ENCODE measurements at regions of chr17 and their contacts with region 1.

Region 1: GRCh38 chr17:38853292-38854219 is at the start of gene RPL23:
- DNase-seq: peak; percentile 95 to 97
- H3K4me3 ChIP-seq: peak within 1 kb of the TSS; percentile 53 to 78
- H3K27ac ChIP-seq: peak within 1 kb of the TSS; percentile 87 to 88
- H3K4me1 ChIP-seq: peaks cover 0 to 29% (median 20%) of the 10 kb centered on the region in 4 donors
- H3K27me3 ChIP-seq: no peaks in the 10 kb centered on the region
- CTCF ChIP-seq: no peak

Region 2: GRCh38 chr17:38464723-38465390 is 388.7 kb before region 1 on chr17:
- intact Hi-C with region 1: no loop called
- DNase-seq: peak; percentile 90 to 97
- H3K4me3 ChIP-seq: peak overlapping the region; percentile 48 to 54
- H3K27ac ChIP-seq: peak overlapping the region; percentile 93
- H3K4me1 ChIP-seq: peaks cover 0 to 74% (median 64%) of the 10 kb centered on the region in 4 donors
- H3K27me3 ChIP-seq: no peaks in the 10 kb centered on the region
- CTCF ChIP-seq: no peak

Region 3: DNA sequence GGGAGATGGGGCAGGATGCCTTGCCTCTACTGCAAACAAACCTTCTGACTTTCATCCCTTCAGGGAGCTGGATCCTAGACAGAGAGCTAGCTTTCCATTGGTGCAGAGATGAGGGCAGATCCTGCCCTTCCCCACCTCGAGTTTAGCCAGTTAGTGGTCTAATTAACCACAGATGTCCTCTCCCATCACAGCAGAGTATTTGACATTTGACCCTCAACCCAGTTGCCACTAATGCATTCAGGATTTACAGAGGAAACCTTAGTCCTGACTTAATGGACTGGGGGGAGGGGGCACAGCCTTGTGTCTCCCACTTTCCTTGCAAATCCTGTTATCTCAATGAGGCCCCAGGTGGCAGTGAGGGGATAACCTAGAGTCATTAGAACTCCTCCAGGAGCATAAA is 64.4 kb before region 1 on chr17:
- intact Hi-C with region 1: no loop called
- DNase-seq: no peak
- H3K4me3 ChIP-seq: no peak overlapping the region
- H3K27ac ChIP-seq: no peak overlapping the region
- H3K4me1 ChIP-seq: peaks cover 0 to 27% (median 12%) of the 10 kb centered on the region in 4 donors
- H3K27me3 ChIP-seq: no peaks in the 10 kb centered on the region
- CTCF ChIP-seq: no peak

Region 4: GRCh38 chr17:38824899-38825761 is 28.4 kb before region 1 on chr17 and contains the start of gene CWC25:
- intact Hi-C with region 1: loop called (anchors 2 kb)
- DNase-seq: peak; percentile 93 to 98
- H3K4me3 ChIP-seq: peak within 1 kb of the TSS; percentile 72 to 83
- H3K27ac ChIP-seq: peak within 1 kb of the TSS; percentile 92 to 95
- H3K4me1 ChIP-seq: peaks cover 0 to 22% (median 17%) of the 10 kb centered on the region in 4 donors
- H3K27me3 ChIP-seq: no peaks in the 10 kb centered on the region
- CTCF ChIP-seq: peak in 1 of 2 experiments; percentile 5

Measured in tibial artery (tissue), 4 donors.